IMR-90 (cell line): ENCODE measurements at regions of chr22 and their contacts with region 1.

Region 1: DNA sequence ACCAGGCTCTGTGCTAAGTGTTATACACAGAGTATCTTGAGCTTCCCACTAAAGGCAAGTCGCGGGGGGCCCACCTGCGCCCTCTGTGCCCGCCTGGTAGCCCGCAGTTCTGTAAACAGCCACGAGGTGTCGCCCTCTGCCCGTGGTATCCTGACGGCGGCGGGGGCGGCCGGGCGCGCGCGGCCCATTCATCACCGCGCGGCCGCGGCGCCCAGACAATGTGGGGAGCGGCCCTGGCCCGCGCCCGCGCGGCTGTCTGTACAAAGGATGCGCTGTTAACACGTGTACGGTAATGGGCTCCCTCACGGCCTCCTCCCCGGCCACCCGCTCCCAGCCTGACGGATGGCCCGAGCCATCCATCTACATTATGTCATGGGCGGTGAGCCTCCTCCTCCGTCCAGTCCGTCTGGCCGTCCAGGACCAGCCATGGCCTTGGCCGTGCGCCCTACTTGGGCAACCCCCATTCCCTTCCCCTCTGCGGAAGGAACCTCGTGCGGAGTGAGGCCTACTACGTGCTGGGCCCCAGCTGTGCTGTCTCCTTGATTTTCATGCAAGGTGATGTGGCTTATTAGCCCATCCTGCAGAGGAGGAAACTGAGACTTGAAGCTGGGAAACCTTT is 99.4 kb downstream of the MIAT start:
- DNase-seq: peak; percentile 36
- ATAC-seq: peak; percentile 95
- H3K4me3 ChIP-seq: peak overlapping the region; percentile 17
- H3K27ac ChIP-seq: no peak overlapping the region
- H3K4me1 ChIP-seq: no peaks in the 10 kb centered on the region
- H3K27me3 ChIP-seq: no peaks in the 10 kb centered on the region
- CTCF ChIP-seq: peak; percentile 88
- POLR2A ChIP-seq: 0 out of 2 replicates have a peak, but pooled peaks have one; percentile 46
- RAD21 ChIP-seq: peak; percentile 90

Region 2: GRCh38 chr22:26679003-26679629 is 77.7 kb before region 1 on chr22:
- CTCF ChIA-PET with region 1: interaction called, 4 read pairs
- POLR2A ChIA-PET with region 1: no interaction called
- dilution Hi-C with region 1: no loop called
- in situ Hi-C with region 1: no loop called
- intact Hi-C with region 1: loop called (anchors 2 kb)
- DNase-seq: peak; percentile 71
- ATAC-seq: peak; percentile 91
- H3K4me3 ChIP-seq: no peak overlapping the region
- H3K27ac ChIP-seq: no peak overlapping the region
- H3K4me1 ChIP-seq: peaks cover 14% of the 10 kb centered on the region
- H3K27me3 ChIP-seq: no peaks in the 10 kb centered on the region
- CTCF ChIP-seq: peak; percentile 93
- POLR2A ChIP-seq: no peak
- RAD21 ChIP-seq: peak; percentile 94

Region 3: DNA sequence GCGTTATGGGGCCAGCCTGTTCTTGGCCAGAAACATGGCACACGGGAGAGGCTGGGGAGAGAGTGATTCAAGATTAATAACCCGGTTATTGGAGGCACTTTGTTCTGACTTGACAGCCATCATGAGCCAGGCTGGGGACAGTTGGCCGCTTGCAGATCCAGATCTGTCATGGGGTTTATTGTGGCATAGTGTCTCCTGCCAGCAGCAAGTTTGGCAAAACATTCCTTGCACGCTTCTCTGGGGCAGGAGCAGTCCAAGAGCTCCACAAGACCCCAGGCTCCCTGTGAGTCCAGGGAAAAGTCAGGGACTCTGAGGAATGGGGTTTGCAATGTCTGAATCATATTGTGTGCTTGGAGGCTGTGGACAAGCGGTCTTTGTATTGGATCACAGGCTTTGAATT is 171.0 kb after region 1 on chr22:
- CTCF ChIA-PET with region 1: no interaction called
- POLR2A ChIA-PET with region 1: no interaction called
- dilution Hi-C with region 1: no loop called
- in situ Hi-C with region 1: no loop called
- intact Hi-C with region 1: no loop called
- DNase-seq: no peak
- ATAC-seq: no peak
- H3K4me3 ChIP-seq: no peak overlapping the region
- H3K27ac ChIP-seq: no peak overlapping the region
- H3K4me1 ChIP-seq: no peaks in the 10 kb centered on the region
- H3K27me3 ChIP-seq: peaks cover 27% of the 10 kb centered on the region
- CTCF ChIP-seq: no peak
- POLR2A ChIP-seq: no peak
- RAD21 ChIP-seq: no peak

Region 4: DNA sequence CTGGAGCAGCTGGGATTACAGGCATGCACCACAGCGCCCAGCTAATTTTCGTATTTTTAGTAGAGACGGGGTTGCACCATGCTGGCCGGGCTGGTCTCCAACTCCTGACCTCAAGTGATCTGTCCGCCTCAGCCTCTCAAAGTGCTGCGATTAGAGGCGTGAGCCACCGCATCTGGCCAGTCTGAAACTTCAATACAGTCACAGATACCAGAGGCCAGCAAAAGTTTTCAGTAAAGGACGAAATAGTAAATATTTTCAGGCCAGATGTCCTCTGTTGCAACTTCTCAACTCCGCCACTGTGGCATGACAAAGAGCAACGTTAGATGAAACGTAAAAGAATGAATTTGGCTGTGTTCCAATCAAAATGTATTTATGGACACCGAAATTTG is 641.2 kb after region 1 on chr22:
- CTCF ChIA-PET with region 1: no interaction called
- POLR2A ChIA-PET with region 1: no interaction called
- dilution Hi-C with region 1: no loop called
- in situ Hi-C with region 1: loop called (anchors 10 kb)
- intact Hi-C with region 1: loop called (anchors 1 kb)
- DNase-seq: peak; percentile 50
- ATAC-seq: peak; percentile 60
- H3K4me3 ChIP-seq: no peak overlapping the region
- H3K27ac ChIP-seq: no peak overlapping the region
- H3K4me1 ChIP-seq: peaks cover 2% of the 10 kb centered on the region; the same call in 1 of the 2 replicates
- H3K27me3 ChIP-seq: peaks cover 47% of the 10 kb centered on the region
- CTCF ChIP-seq: no peak
- POLR2A ChIP-seq: no peak
- RAD21 ChIP-seq: no peak

Region 5: GRCh38 chr22:27405672-27406388 is 649.0 kb after region 1 on chr22:
- CTCF ChIA-PET with region 1: no interaction called
- POLR2A ChIA-PET with region 1: interaction called, 14 read pairs
- dilution Hi-C with region 1: no loop called
- in situ Hi-C with region 1: loop called (anchors 10 kb)
- intact Hi-C with region 1: no loop called
- DNase-seq: peak; percentile 45
- ATAC-seq: peak; percentile 95
- H3K4me3 ChIP-seq: no peak overlapping the region
- H3K27ac ChIP-seq: no peak overlapping the region
- H3K4me1 ChIP-seq: no peaks in the 10 kb centered on the region
- H3K27me3 ChIP-seq: peaks cover 14% of the 10 kb centered on the region
- CTCF ChIP-seq: peak; percentile 79
- POLR2A ChIP-seq: peak; percentile 28; the same call in 1 of the 2 replicates
- RAD21 ChIP-seq: peak; percentile 93

Region 6: GRCh38 chr22:27810609-27811151 is 1053.9 kb after region 1 on chr22:
- CTCF ChIA-PET with region 1: no interaction called
- POLR2A ChIA-PET with region 1: no interaction called
- dilution Hi-C with region 1: no loop called
- in situ Hi-C with region 1: loop called (anchors 10 kb)
- intact Hi-C with region 1: no loop called
- DNase-seq: peak; percentile 68
- ATAC-seq: peak; percentile 86
- H3K4me3 ChIP-seq: no peak overlapping the region
- H3K27ac ChIP-seq: peak overlapping the region; percentile 45; the same call in 1 of the 2 replicates
- H3K4me1 ChIP-seq: peaks cover 13% of the 10 kb centered on the region
- H3K27me3 ChIP-seq: no peaks in the 10 kb centered on the region
- CTCF ChIP-seq: no peak
- POLR2A ChIP-seq: no peak
- RAD21 ChIP-seq: no peak

Region 7: DNA sequence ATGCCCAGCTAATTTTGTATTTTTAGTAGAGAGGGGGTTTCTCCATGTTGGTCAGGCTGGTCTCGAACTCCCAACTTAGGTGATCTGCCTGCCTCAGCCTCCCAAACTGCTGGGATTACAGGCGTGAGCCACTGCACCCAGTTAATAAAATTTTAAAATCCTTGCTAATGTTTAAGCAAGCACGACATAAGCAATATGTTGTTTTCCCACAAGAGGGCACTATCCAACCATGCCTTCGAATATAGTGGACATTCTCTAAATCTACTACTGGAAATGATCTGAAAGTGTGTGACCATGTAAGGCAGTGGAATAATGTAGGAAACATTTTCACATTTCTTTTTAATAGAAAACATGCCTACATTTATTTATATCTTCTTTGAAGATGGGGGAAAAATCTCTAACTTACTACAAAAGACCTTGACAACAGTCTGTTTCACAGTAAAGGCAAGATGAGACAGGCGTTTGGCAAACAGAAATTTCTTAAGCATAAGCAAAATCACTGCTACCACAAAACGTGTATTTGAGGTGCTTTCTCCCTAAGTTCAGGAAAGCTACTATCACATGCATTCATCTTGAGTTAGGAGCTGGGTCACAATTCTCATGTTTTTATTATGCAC is 1124.1 kb after region 1 on chr22:
- CTCF ChIA-PET with region 1: no interaction called
- POLR2A ChIA-PET with region 1: no interaction called
- dilution Hi-C with region 1: no loop called
- in situ Hi-C with region 1: no loop called
- intact Hi-C with region 1: loop called (anchors 5 kb)
- DNase-seq: peak; percentile 86
- ATAC-seq: peak; percentile 68
- H3K4me3 ChIP-seq: no peak overlapping the region
- H3K27ac ChIP-seq: peak overlapping the region; percentile 67; the same call in 1 of the 2 replicates
- H3K4me1 ChIP-seq: peaks cover 31% of the 10 kb centered on the region
- H3K27me3 ChIP-seq: no peaks in the 10 kb centered on the region
- CTCF ChIP-seq: peak; percentile 84
- POLR2A ChIP-seq: peak; percentile 46; the same call in 1 of the 2 replicates
- RAD21 ChIP-seq: peak; percentile 90

Region 8: GRCh38 chr22:28009272-28009827 is 1252.6 kb after region 1 on chr22:
- CTCF ChIA-PET with region 1: no interaction called
- POLR2A ChIA-PET with region 1: no interaction called
- dilution Hi-C with region 1: no loop called
- in situ Hi-C with region 1: loop called (anchors 25 kb)
- intact Hi-C with region 1: loop called (anchors 1 kb)
- DNase-seq: peak; percentile 78
- ATAC-seq: peak; percentile 83
- H3K4me3 ChIP-seq: no peak overlapping the region
- H3K27ac ChIP-seq: no peak overlapping the region
- H3K4me1 ChIP-seq: peaks cover 25% of the 10 kb centered on the region
- H3K27me3 ChIP-seq: no peaks in the 10 kb centered on the region
- CTCF ChIP-seq: peak; percentile 98
- POLR2A ChIP-seq: peak; percentile 43; the same call in 1 of the 2 replicates
- RAD21 ChIP-seq: peak; percentile 99